Ascending aorta (tissue), 2 donors: ENCODE measurements at regions of chr9 and their contacts with region 1.

Region 1: GRCh38 chr9:127916665-127917613 is at the start of gene ST6GALNAC4:
- DNase-seq: peak; percentile 81 to 97
- H3K4me3 ChIP-seq: peak within 1 kb of the TSS; percentile 64 to 69
- H3K27ac ChIP-seq: peak within 1 kb of the TSS; percentile 69 to 79
- H3K4me1 ChIP-seq: peaks cover 10 to 47% of the 10 kb centered on the region in 2 donors
- H3K27me3 ChIP-seq: no peaks in the 10 kb centered on the region
- CTCF ChIP-seq: no peak
- total RNA-seq, gene ST6GALNAC4: 134 TPM

Region 2: GRCh38 chr9:127473501-127473900 is 443.4 kb before region 1 on chr9:
- intact Hi-C with region 1: no loop called
- DNase-seq: no peak
- H3K4me3 ChIP-seq: no peak overlapping the region
- H3K27ac ChIP-seq: no peak overlapping the region
- H3K4me1 ChIP-seq: no peaks in the 10 kb centered on the region
- H3K27me3 ChIP-seq: no peaks in the 10 kb centered on the region
- CTCF ChIP-seq: no peak

Region 3: GRCh38 chr9:127503947-127504782 is 412.8 kb before region 1 on chr9:
- intact Hi-C with region 1: loop called (anchors 10 kb)
- DNase-seq: peak; percentile 44 to 92
- H3K4me3 ChIP-seq: no peak overlapping the region
- H3K27ac ChIP-seq: peak overlapping the region; percentile 45 to 50
- H3K4me1 ChIP-seq: peaks cover 0 to 5% of the 10 kb centered on the region in 2 donors
- H3K27me3 ChIP-seq: no peaks in the 10 kb centered on the region
- CTCF ChIP-seq: peak; percentile 83 to 94 (median 87)

Region 4: GRCh38 chr9:127715394-127716337 is 201.3 kb before region 1 on chr9 and contains the starts of genes PTRH1 and TTC16:
- intact Hi-C with region 1: loop called (anchors 5 kb)
- DNase-seq: peak; percentile 84 to 99
- H3K4me3 ChIP-seq: peak within 1 kb of the TSS; percentile 61 to 93
- H3K27ac ChIP-seq: peak within 1 kb of the TSS; percentile 82 to 85
- H3K4me1 ChIP-seq: peaks cover 0 to 10% of the 10 kb centered on the region in 2 donors
- H3K27me3 ChIP-seq: no peaks in the 10 kb centered on the region
- CTCF ChIP-seq: no peak
- total RNA-seq, gene PTRH1: 5.4 TPM
- total RNA-seq, gene TTC16: not detected

Region 5: GRCh38 chr9:127785023-127785932 is 131.7 kb before region 1 on chr9:
- intact Hi-C with region 1: loop called (anchors 1 kb)
- DNase-seq: peak in 1 of 2 donors; percentile 93
- H3K4me3 ChIP-seq: peak overlapping the region; percentile 84 to 89
- H3K27ac ChIP-seq: peak overlapping the region; percentile 91 to 94
- H3K4me1 ChIP-seq: peaks cover 13 to 38% of the 10 kb centered on the region in 2 donors
- H3K27me3 ChIP-seq: no peaks in the 10 kb centered on the region
- CTCF ChIP-seq: peak; percentile 96 to 99 (median 99)

Region 6: DNA sequence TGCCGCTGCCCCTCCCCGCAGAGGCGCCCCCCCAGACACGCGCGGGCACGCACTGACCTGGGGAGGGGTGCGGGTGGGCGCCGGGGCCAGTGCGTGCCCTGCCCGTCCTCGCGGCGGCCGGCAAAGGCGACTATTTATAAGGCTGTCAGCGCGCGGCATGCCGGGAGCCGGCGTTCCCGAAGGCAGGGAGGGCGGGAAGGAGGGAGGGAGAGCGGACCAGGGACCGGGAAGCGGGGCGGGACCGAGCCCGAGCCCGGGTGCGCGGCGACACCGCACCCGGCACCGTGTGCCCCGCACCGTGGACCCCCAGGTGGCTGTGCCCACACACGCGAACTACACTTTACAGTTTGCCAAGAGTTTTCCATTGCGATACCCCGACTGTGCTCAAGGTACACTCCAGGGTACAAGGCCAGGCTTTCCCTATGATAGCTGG is 39.4 kb before region 1 on chr9 and contains the start of gene AK1:
- intact Hi-C with region 1: loop called (anchors 2 kb)
- DNase-seq: peak in 1 of 2 donors; percentile 89
- H3K4me3 ChIP-seq: peak within 1 kb of the TSS; percentile 65 to 67
- H3K27ac ChIP-seq: peak within 1 kb of the TSS; percentile 76 to 80
- H3K4me1 ChIP-seq: peaks cover 24 to 44% of the 10 kb centered on the region in 2 donors
- H3K27me3 ChIP-seq: no peaks in the 10 kb centered on the region
- CTCF ChIP-seq: no peak
- total RNA-seq, gene AK1: 64.5 TPM

Region 7: GRCh38 chr9:128159784-128160602 is 243.1 kb after region 1 on chr9 and contains the start of gene BBLN:
- intact Hi-C with region 1: no loop called
- DNase-seq: peak; percentile 63 to 97
- H3K4me3 ChIP-seq: peak within 1 kb of the TSS; percentile 59 to 90
- H3K27ac ChIP-seq: peak within 1 kb of the TSS; percentile 59 to 66
- H3K4me1 ChIP-seq: peaks cover 0 to 18% of the 10 kb centered on the region in 2 donors
- H3K27me3 ChIP-seq: no peaks in the 10 kb centered on the region
- CTCF ChIP-seq: no peak
- total RNA-seq, gene BBLN: 389 TPM